MCF 10A (cell line): ENCODE measurements at regions of chr2 and their contacts with region 1.

Region 1: DNA sequence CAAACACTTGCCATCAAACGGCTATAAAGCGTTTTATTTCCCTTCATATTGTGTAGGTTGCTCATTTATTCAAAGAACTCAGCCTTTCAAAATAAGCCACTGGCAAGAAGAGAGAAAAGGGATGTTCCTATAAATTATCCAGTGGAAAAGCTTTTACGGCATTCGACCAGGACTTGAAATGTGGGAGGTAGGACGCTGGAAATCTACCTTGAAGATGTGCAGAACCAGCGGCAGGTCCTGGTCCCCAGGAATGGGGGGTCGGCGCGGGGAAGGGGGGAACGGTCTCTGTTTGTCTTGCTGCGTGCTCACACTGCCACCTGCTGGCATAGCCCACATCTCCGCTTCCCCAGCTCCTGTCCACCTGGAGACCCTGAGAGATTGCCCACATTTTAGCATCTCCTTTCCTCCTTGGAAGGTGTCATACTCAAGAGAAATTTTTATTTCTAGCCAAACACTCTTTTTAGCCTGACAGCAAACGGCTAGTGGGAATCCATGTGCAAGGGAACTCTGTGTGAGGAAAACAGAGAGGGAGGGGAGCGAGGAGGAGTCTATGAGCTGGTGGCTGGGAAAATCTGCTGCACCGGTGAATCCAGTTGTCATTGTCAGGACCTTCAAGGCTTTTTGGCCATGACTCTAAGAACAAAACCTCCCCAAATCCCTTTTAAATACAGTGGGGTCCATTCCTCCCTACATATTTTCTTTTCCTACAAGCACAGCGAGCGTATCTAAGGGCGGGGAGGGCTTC is 349.0 kb upstream of the PKDCC start:
- DNase-seq: no peak
- H3K4me3 Mint-ChIP-seq: no peak overlapping the region
- H3K27ac Mint-ChIP-seq: no peak overlapping the region
- H3K4me1 Mint-ChIP-seq: no peaks in the 10 kb centered on the region
- H3K27me3 Mint-ChIP-seq: no peaks in the 10 kb centered on the region
- CTCF ChIP-seq: peak; percentile 69

Region 2: DNA sequence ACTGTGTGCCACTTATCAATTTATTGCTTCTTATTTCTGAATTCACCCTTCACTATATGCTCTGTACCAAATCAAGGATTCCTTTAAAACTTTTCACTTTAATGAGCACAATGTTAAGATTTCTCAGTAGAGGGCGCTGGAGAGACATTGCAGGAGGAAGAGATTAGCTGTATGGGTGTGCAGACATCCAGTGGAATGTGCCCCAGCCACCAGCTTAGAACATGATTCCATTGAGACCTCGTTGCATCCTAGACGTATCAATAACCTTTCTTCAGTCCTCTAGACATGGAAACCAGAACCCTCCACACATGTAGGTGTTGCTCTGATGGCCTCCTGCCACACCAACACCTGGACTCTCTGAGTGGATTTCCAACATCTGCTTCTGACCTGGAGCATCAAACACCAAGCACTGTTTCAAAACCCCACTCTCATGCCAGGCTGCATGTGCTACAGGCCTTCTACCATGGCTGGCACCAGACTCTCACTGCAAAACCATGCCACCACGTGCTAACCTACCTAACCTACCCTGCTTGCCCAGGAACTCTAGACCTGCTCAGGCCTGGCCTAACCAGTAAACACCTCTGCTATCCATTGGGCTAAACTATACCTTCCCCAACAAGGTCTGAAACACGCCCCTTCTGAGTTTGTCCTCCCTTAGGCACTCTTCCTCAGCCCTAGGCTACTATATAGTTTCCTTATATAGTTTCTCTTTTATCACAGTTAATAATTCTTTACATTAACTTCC is 284.2 kb before region 1 on chr2:
- CTCF ChIA-PET with region 1: interaction called, 12 read pairs
- POLR2A ChIA-PET with region 1: interaction called, 3 read pairs
- intact Hi-C with region 1: loop called (anchors 1 kb)
- DNase-seq: peak; percentile 67
- H3K4me3 Mint-ChIP-seq: no peak overlapping the region
- H3K27ac Mint-ChIP-seq: no peak overlapping the region
- H3K4me1 Mint-ChIP-seq: no peaks in the 10 kb centered on the region
- H3K27me3 Mint-ChIP-seq: no peaks in the 10 kb centered on the region
- CTCF ChIP-seq: peak; percentile 64

Region 3: GRCh38 chr2:41510108-41510507 is 188.7 kb before region 1 on chr2:
- CTCF ChIA-PET with region 1: no interaction called
- POLR2A ChIA-PET with region 1: no interaction called
- intact Hi-C with region 1: no loop called
- DNase-seq: no peak
- H3K4me3 Mint-ChIP-seq: no peak overlapping the region
- H3K27ac Mint-ChIP-seq: no peak overlapping the region
- H3K4me1 Mint-ChIP-seq: no peaks in the 10 kb centered on the region
- H3K27me3 Mint-ChIP-seq: no peaks in the 10 kb centered on the region
- CTCF ChIP-seq: no peak

Region 4: DNA sequence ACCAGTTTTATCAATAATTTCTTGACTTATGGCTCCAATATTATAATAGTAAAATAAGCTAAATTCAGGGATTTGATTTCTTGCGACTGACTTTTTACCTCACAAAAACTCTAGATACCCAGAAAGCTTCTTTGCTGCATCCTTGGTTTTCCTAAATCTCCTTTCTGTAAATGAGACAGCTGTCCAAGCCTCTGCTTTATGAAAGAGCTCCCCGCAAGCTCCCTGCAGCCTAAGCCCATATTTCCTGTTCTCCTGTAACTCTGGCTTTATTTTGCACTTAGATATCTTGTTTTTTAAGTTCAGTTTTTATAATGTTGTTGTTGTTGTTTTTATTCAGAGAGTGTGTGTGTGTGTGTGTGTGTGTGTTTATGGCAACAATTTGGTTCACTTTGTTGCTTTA is 12.7 kb before region 1 on chr2:
- CTCF ChIA-PET with region 1: interaction called, 10 read pairs
- POLR2A ChIA-PET with region 1: interaction called, 3 read pairs
- intact Hi-C with region 1: no loop called
- DNase-seq: no peak
- H3K4me3 Mint-ChIP-seq: no peak overlapping the region
- H3K27ac Mint-ChIP-seq: no peak overlapping the region
- H3K4me1 Mint-ChIP-seq: no peaks in the 10 kb centered on the region
- H3K27me3 Mint-ChIP-seq: no peaks in the 10 kb centered on the region
- CTCF ChIP-seq: no peak

Region 5: DNA sequence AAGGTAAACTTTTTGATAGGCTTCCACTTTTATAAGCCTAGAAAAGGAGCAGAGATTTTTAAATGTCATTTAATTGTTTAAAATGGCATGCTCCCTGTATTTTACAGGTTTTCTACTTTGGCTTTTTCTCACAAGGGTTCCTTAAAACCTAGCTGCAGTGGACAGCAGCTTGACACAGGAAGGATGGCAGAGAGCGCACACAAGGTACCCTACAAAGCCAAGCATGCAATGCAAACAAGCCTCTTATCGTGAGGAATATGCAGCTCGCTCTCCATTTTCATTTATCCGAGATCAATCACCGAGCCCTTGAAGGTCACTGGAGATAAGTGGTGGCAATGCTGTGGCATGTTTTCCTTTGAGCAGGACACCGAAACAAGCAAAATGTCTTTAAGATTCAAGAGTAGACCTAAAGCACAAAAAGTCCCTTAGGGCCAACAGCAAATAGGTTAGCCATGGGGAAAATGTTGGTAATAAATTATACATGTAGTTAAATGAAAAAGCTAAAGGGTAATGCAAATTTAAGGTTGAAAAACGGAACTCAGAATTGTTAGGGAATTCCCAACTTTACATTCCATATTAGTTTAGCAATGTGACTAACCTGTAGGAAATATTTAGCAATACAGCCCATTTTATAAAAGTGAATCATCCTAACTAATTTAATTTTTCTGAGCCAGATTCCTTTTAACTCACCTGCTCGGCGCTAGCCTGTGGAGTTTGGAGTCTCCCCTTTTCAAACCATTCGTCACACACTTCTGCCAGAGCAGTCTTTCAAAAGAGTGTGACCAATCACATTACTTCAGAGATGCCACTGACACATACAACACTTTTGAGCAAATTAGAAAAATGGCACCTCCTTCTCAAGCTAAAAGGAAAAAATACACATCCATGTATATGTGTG is 11.1 kb after region 1 on chr2:
- CTCF ChIA-PET with region 1: interaction called, 12 read pairs
- POLR2A ChIA-PET with region 1: interaction called, 3 read pairs
- intact Hi-C with region 1: no loop called
- DNase-seq: peak; percentile 80
- H3K4me3 Mint-ChIP-seq: peak overlapping the region; percentile 64
- H3K27ac Mint-ChIP-seq: peak overlapping the region; percentile 76
- H3K4me1 Mint-ChIP-seq: peaks cover 18% of the 10 kb centered on the region
- H3K27me3 Mint-ChIP-seq: no peaks in the 10 kb centered on the region
- CTCF ChIP-seq: no peak

Region 6: GRCh38 chr2:41720331-41720730 is 21.5 kb after region 1 on chr2:
- CTCF ChIA-PET with region 1: interaction called, 10 read pairs
- POLR2A ChIA-PET with region 1: no interaction called
- intact Hi-C with region 1: no loop called
- DNase-seq: no peak
- H3K4me3 Mint-ChIP-seq: no peak overlapping the region
- H3K27ac Mint-ChIP-seq: no peak overlapping the region
- H3K4me1 Mint-ChIP-seq: peaks cover 47% of the 10 kb centered on the region
- H3K27me3 Mint-ChIP-seq: no peaks in the 10 kb centered on the region
- CTCF ChIP-seq: no peak

Region 7: DNA sequence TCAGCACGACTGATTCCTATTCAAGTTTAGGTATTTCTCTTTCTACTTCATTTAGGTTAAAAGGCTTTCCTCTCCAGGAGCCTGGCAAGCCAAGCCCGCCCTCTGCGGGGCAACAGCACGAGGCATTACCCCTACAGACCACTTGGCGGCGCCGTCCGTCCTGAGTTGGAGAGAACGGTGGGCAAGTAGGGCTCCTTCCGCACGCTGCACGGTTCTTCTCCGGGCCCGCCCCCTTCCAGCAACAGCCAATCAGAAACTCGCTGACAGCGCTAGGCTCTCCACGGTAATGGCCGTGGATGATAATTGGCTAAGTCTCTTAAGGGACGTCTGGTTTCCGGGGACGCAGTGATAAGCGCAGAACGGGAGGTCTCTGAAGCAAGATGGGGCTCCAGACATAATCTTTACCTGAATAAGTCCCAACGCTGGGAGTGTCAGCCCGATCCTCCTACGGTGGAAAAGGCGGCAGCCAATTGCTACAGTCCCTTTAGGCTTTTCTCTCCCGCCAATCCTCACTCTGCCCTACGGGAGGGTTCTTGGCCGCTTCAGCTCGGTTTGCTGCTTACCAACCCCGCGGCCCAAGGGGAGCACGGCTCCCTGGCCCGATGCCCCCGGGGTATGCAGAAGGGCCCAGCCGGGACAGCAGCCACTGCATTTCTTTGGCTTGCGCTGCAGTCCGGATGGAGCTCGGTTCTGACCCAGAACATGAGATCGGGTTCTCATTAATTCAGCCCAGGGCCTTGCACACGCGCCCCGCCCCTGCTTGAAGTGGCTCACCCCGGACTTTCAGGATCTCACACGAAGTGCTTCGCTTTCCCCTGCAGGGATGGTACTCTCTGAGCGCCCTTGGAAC is 142.1 kb after region 1 on chr2:
- CTCF ChIA-PET with region 1: no interaction called
- POLR2A ChIA-PET with region 1: no interaction called
- intact Hi-C with region 1: no loop called
- DNase-seq: peak; percentile 94
- H3K4me3 Mint-ChIP-seq: peak overlapping the region; percentile 89
- H3K27ac Mint-ChIP-seq: peak overlapping the region; percentile 76
- H3K4me1 Mint-ChIP-seq: peaks cover 10% of the 10 kb centered on the region
- H3K27me3 Mint-ChIP-seq: peaks cover 39% of the 10 kb centered on the region
- CTCF ChIP-seq: peak; percentile 96